Prostate gland (tissue), 2 donors: ENCODE measurements at regions of chr12 and their contacts with region 1.

Region 1: DNA sequence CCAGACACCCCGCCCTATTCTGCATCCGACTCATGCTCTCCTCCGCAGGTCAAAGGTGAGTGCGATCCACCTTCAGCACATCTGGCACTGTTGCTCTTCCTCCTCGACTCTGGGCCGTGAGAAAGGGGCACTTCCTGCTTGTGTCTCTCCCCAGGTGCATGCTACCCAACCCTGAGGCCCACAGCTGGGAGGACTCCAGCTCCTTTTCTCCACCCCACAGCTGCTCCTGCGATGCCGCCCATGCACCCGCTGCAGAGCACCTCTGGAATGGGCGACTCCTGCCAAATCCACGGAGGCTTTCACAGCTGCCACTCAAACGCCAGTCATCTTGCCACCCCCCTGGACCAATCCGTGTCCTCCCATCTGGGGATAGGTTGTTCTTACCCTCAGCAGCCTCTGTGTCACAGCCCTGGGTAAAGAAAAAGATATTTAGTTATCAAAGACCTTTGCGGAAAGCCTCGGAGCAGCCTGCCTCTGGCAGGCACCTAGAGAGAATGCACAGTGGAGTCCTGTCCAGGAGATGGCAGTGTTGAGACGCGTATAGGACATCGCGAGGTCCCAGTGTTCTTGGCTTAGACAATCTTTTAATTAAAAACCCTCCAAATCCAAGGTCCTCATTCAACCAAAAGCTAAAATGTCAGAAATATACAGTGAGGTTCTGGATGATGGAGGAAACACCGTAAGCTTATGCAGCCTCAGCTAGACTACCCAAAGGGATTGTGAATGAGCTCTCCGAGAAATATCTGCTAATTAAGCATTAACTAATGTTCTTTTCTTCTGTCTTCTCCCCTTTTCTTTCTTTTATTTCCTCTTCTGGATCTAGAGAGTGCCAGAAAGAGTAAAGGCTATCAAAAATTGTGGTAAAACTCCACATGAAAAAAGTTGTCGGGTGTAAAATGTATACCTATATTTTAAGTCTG is 54.3 kb downstream of the MYRFL start:
- DNase-seq: peak; percentile 46
- H3K4me3 ChIP-seq: no peak overlapping the region
- H3K27ac ChIP-seq: no peak overlapping the region
- H3K4me1 ChIP-seq: no peaks in the 10 kb centered on the region
- H3K27me3 ChIP-seq: no peaks in the 10 kb centered on the region
- CTCF ChIP-seq: peak; percentile 69 to 83 (median 76)
- POLR2A ChIP-seq: no peak

Region 2: GRCh38 chr12:69947897-69948296 is 68.6 kb after region 1 on chr12:
- intact Hi-C with region 1: no loop called
- DNase-seq: no peak
- H3K4me3 ChIP-seq: no peak overlapping the region
- H3K27ac ChIP-seq: no peak overlapping the region
- H3K4me1 ChIP-seq: no peaks in the 10 kb centered on the region
- H3K27me3 ChIP-seq: no peaks in the 10 kb centered on the region
- CTCF ChIP-seq: no peak
- POLR2A ChIP-seq: no peak

Region 3: DNA sequence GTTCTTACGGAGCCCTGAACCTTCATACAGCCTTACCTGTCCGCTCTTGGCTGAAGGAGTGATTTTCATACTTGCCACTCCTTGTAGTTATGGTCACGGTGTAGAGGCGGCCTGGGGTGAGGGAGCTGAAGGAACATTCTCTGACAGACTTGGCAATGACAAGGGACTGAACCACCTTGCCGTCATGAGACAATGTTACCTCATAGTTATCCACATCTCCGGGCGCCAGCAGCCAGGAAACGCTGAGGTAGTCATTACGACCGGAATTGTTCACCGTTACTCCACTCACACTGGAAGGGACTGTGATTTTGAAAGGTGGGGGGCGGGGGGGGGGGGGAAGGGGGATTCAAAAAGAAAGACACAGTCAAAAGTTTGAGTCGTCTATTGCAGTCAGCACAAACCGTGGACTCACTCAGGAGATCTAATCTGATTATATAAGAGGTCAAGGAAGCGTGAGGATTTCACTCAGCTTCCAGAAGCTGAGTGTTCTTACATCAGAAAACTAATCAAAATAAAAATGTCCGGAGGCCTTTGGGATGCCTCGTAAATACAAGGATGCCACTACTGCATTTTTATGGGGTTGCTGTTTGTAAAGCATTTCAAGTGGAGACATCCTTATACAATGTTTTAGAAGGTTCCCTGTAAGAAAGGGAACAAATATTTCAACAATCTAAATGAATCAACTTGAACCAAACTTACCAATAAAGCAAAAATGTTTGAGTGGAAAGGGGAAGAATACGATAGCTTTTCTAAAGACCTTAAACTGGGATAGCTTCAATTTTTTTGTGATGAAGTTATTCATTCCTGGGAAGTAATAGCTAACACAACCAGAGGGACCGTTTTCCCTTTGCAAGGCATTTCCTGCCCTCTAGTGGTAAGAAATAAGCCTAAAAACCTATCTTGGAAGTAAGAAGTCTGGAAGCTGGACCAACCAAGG is 697.3 kb after region 1 on chr12:
- intact Hi-C with region 1: loop called (anchors 1 kb)
- DNase-seq: peak; percentile 10
- H3K4me3 ChIP-seq: no peak overlapping the region
- H3K27ac ChIP-seq: no peak overlapping the region
- H3K4me1 ChIP-seq: no peaks in the 10 kb centered on the region
- H3K27me3 ChIP-seq: no peaks in the 10 kb centered on the region
- CTCF ChIP-seq: peak; percentile 30 to 76 (median 74)
- POLR2A ChIP-seq: no peak

Region 4: DNA sequence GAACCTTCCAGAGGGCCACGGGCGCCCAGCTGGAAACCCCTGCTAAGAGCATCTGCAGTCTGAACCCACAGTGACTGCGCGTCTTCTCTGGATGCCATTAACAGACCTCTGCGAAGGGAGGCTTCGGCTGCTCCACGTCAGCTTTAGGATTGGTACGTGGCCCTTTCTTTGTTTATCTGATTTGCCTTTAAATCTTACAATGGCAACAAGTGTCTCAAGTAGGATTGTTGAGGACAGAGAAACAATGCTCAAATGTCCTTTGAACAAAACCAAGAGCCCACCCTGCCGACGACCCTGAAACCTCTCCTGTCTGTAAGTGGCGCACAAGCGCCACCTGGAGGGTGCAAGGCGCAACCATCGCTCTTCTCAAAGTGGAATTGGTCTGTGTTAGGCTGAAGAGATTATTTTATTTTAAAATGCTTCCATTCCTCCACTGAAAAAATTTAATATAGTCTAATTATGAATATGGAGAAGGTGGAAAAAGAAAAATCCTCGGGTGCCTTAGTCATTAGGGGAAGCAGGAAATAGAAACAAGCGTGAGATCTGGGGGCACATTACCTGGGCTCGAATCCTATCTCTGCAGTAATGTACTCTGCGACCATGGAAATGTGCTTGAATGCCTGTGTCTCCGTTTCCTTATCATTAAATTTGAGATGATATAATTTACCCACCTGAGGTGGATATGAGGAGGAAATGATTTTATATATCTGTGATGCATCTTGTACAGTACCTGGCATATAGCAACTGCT is 840.5 kb after region 1 on chr12:
- intact Hi-C with region 1: loop called (anchors 10 kb)
- DNase-seq: peak; percentile 18
- H3K4me3 ChIP-seq: no peak overlapping the region
- H3K27ac ChIP-seq: no peak overlapping the region
- H3K4me1 ChIP-seq: no peaks in the 10 kb centered on the region
- H3K27me3 ChIP-seq: no peaks in the 10 kb centered on the region
- CTCF ChIP-seq: peak; percentile 50 to 85 (median 81)
- POLR2A ChIP-seq: no peak